ENCODE measurements at regions of chr20 and their contacts with region 1.

Region 1: DNA sequence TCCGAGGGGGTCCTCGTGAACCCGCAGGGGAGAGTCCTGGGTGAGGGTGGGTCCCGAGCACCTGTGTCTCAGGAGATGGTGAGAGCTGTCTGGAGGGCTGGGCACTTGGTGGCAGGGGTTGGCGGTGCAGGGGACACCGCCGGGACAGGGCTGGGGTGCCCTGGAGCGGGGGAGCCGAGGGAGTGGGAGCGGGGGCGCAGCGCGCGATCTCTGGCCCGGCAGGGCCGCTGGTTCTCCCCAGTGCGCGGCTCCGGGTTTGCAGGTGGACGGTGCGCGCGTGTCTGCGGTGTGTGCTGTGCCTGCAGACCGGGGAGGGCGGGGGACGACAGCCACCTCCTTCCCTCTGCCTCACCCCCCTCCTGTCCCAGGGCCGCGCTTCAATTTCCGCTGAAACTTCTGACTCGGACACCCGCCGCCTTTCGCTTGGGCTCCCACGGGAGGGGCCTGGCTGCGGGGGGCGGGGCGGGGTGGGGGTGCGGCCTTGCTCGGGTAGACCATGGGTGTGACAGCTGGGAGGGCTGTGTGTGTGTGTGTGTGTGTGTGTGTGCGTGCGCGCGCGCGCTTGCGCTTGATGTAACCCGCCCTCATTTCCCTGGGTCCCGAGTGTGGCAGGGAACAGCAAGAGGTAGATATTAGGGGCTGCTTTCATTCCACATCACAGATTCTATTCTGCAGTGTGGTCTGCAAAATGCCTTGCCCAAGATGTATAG is 1.2 kb downstream of the TRIB3 start:
- DNase-seq: peak; percentile 84
- ATAC-seq: peak; percentile 64
- H3K4me3 ChIP-seq: peak overlapping the region; percentile 80
- H3K27ac ChIP-seq: peak overlapping the region; percentile 85
- H3K4me1 ChIP-seq: peaks cover 36% of the 10 kb centered on the region
- H3K27me3 ChIP-seq: no peaks in the 10 kb centered on the region
- CTCF ChIP-seq: no peak

Region 2: GRCh38 chr20:313948-314347 is 67.8 kb before region 1 on chr20:
- CTCF ChIA-PET with region 1: no interaction called
- POLR2A ChIA-PET with region 1: interaction called, 13 read pairs
- intact Hi-C with region 1: no loop called
- DNase-seq: peak; percentile 97
- ATAC-seq: peak; percentile 99
- H3K4me3 ChIP-seq: no peak overlapping the region
- H3K27ac ChIP-seq: no peak overlapping the region
- H3K4me1 ChIP-seq: peaks cover 13% of the 10 kb centered on the region
- H3K27me3 ChIP-seq: no peaks in the 10 kb centered on the region
- CTCF ChIP-seq: no peak

Region 3: DNA sequence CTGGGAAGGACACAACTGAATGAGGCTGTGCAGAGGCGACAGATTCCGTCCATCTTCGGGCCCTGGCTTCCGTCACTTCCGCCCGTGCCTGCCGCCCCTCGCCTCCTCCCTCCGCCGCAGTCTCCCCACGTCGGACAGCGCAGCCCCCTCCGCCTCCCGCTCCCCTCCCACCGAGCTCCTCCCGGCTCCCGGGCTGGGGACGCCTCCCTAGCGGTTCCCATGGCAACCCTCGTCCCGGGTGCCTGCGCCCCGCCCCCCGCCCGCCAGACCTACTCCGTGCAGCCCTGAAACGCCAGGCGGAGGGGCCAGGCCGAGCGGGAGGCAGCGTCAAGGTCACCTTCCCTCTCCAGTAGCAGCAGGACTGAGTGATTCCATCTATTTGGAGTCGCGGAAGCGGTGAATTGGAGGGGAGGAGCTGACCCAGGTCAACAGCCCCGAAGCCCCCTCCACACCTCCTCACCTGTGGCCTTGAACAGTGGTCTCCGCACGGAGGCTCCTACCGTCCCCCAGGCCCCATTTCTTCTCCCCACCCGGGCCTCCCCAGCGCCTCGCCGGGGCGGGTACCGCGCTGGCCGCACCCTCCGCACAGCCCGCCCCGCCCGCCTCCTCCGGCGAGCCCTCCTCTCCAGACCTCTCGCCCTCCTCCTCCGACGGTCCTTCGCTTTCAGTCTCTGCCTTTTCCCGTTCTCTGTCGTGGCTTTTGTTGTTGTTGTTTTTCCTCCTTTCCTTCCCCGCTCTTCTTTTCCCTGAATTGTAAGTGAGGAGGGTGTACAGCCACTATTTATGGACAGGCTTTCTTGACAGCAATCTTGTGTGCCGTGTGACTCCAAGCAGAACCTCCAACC is 33.9 kb before region 1 on chr20:
- CTCF ChIA-PET with region 1: no interaction called
- POLR2A ChIA-PET with region 1: no interaction called
- intact Hi-C with region 1: no loop called
- DNase-seq: peak; percentile 94
- ATAC-seq: peak; percentile 75
- H3K4me3 ChIP-seq: peak overlapping the region; percentile 79
- H3K27ac ChIP-seq: peak overlapping the region; percentile 81
- H3K4me1 ChIP-seq: peaks cover 12% of the 10 kb centered on the region
- H3K27me3 ChIP-seq: no peaks in the 10 kb centered on the region
- CTCF ChIP-seq: no peak

Region 4: DNA sequence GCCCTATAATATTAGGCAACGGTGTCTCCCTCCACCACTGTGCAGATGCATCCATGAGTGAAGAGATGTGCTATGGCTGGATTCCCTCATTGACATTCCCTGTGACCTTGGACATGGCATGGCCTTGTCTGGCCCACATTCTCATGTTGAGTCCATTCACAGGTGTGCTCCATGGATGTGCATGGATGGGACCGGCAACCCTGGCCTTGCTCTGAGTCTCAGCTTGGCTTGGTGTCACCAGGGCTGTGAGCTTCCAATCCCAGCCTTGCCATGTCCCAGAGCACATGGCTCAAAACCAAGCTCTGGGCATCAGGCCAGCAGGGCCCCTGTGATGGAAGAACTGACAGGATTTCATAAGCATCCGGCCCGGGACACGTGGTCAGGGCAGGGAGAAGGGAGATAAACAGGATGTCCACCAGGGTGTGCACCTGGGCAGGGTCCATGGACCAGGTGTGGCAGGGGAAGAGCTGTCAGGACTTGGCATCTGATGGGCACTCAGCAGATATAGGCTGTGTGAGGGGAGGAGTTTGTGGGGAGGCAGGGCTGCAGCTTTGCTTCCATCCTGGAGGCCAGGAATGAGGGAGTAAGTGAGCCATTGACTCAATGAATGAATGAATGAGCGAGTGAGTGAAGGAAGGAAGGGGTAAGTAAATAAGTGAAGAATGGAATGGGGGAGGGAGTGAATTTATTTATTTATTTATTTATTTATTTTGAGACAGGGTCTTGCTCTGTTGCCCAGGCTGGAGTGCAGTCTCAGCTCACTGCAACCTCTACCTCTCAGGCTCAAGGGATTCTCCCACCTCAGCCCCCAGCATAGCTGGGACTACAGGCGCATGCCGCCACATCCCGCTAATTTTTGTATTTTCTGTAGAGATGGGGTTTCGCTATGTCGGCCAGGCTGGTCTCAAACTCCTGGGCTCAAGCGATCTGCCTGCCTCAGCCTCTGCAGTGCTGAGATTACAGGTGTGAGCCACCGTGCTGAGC is 19.2 kb before region 1 on chr20:
- CTCF ChIA-PET with region 1: interaction called, 25 read pairs
- POLR2A ChIA-PET with region 1: interaction called, 26 read pairs
- intact Hi-C with region 1: loop called (anchors 1 kb)
- DNase-seq: peak; percentile 99
- ATAC-seq: peak; percentile 67
- H3K4me3 ChIP-seq: no peak overlapping the region
- H3K27ac ChIP-seq: peak overlapping the region; percentile 86
- H3K4me1 ChIP-seq: peaks cover 52% of the 10 kb centered on the region
- H3K27me3 ChIP-seq: no peaks in the 10 kb centered on the region
- CTCF ChIP-seq: peak; percentile 86

Region 5: DNA sequence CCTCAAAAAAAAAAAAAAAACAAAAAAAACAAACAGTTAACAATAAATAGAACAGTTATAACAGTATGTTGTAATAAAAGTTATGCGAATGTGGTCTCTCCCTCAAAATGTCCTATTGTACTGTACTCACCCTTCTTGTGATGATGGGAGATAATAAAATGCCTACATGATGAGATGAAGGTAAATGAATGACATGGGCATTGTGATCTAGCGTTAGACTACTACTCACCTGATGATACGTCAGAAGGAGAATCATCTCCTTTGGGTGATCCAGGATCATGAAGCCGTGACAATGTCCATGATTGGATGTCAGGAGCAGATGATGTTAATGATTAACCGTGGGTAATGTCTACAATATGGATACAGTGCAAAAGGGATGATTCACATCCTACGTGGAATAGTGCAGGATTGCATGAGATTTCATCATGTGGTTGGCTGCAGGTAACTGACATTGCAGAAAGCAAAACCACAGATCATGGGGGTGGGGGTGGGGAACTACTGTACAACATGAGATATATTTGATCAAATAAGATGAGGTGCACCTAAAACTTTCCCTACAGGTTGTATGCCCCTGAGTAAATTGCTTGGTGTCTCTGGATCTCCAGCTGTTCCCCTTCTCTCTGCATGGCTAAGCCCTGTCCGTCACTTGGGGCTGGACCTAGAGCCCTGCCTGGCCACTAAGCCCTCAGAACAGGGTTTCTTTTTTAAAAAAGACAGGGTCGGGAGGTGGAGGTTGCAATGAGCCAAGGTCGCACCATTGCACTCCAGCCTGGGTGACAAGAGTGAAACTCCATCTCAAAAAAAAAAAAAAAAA is 20.2 kb after region 1 on chr20:
- CTCF ChIA-PET with region 1: no interaction called
- POLR2A ChIA-PET with region 1: interaction called, 4 read pairs
- intact Hi-C with region 1: loop called (anchors 2 kb)
- DNase-seq: peak; percentile 99
- ATAC-seq: peak; percentile 74
- H3K4me3 ChIP-seq: no peak overlapping the region
- H3K27ac ChIP-seq: peak overlapping the region; percentile 91
- H3K4me1 ChIP-seq: peaks cover 27% of the 10 kb centered on the region
- H3K27me3 ChIP-seq: no peaks in the 10 kb centered on the region
- CTCF ChIP-seq: no peak

Region 6: GRCh38 chr20:407133-407952 is 25.6 kb after region 1 on chr20:
- CTCF ChIA-PET with region 1: interaction called, 3 read pairs
- POLR2A ChIA-PET with region 1: interaction called, 19 read pairs
- intact Hi-C with region 1: no loop called
- DNase-seq: peak; percentile 81
- ATAC-seq: peak; percentile 84
- H3K4me3 ChIP-seq: peak overlapping the region; percentile 72
- H3K27ac ChIP-seq: peak overlapping the region; percentile 75
- H3K4me1 ChIP-seq: peaks cover 35% of the 10 kb centered on the region
- H3K27me3 ChIP-seq: no peaks in the 10 kb centered on the region
- CTCF ChIP-seq: peak; percentile 45; the same call in 1 of the 2 replicates

Region 7: DNA sequence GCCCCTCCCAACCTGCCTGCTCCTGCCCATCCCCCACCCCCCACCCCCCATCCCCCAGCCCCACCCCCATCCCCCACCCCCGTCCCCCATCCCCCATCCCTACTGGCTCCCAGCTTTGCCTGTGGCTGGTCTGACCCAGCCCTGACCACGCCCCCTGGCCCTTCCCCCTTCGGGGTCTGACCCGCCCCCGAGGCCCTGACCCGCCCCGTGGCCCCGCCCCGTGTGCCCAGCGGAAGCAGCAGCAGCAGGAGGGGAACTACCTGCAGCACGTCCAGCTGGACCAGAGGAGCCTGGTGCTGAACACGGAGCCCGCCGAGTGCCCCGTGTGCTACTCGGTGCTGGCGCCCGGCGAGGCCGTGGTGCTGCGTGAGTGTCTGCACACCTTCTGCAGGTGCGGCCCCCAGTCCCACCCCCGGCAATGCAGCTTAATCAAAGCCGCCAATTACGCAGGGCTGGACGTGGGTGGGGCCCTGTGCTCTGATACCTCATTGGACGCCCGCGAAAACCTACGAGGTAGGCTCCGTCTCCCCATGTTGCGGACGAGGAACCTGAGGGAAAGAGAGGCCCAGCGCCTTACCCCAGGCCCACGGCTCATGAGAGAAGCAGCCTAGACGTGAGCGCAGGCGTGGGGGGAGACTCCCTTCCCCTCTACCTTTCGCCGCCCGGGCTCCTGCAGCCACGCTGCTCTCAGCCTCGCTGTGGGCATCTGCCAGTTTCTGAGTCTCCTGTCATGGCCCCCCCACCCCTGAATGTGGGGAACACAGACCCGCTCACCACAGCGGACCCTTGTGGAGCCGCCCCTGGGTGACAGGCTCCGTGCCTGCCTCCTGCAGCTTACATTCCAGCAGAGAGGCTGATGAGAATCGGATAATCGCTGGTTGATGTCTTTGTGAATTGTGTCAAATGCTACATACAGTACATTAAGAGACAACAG is 39.2 kb after region 1 on chr20:
- CTCF ChIA-PET with region 1: no interaction called
- POLR2A ChIA-PET with region 1: no interaction called
- intact Hi-C with region 1: no loop called
- DNase-seq: no peak
- ATAC-seq: peak; percentile 52; the same call in 1 of the 2 replicates
- H3K4me3 ChIP-seq: no peak overlapping the region
- H3K27ac ChIP-seq: no peak overlapping the region
- H3K4me1 ChIP-seq: no peaks in the 10 kb centered on the region
- H3K27me3 ChIP-seq: no peaks in the 10 kb centered on the region
- CTCF ChIP-seq: no peak

Region 8: GRCh38 chr20:478949-479429 is 97.3 kb after region 1 on chr20:
- CTCF ChIA-PET with region 1: no interaction called
- POLR2A ChIA-PET with region 1: interaction called, 14 read pairs
- intact Hi-C with region 1: no loop called
- DNase-seq: peak; percentile 84
- ATAC-seq: peak; percentile 69
- H3K4me3 ChIP-seq: no peak overlapping the region
- H3K27ac ChIP-seq: no peak overlapping the region
- H3K4me1 ChIP-seq: no peaks in the 10 kb centered on the region
- H3K27me3 ChIP-seq: no peaks in the 10 kb centered on the region
- CTCF ChIP-seq: peak; percentile 86